GM10248 (cell line): ENCODE measurements at regions of chr10 and their contacts with region 1.

Region 1: DNA sequence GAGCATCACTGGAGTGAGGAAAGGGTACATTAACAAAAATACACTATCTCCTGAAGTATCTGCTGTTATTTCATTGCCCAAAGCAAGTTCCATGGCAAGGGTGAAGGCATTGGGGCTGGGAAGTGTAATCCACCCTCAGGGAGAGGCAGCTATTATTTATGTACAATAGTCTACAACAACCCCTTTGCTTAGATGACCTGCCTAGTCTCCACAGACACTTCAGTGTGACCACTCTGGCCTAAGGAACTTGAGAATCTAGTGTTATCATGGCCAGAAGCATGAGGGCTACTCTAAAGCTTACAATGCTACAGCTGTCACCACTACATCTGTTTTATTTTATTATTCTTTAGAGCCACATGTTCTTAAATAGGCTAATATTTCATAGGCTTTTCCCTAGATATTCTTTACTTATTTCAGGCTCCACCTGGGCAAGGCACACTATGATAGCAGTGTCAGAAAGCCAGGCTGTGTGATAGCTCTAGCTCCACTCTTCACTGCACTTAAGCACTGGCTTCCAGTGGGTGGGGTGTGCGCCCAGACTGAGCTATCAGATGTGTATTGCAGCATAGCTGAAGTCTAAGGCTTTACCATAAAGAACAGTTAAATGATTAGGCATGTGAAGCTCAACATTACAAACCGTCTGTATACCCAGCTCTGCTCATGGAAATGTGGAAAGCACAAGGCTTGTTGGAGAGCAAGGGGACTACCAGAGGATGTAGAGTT is 117.0 kb upstream of the CCDC6 start:
- DNase-seq: no peak
- CTCF ChIP-seq: no peak

Region 2: DNA sequence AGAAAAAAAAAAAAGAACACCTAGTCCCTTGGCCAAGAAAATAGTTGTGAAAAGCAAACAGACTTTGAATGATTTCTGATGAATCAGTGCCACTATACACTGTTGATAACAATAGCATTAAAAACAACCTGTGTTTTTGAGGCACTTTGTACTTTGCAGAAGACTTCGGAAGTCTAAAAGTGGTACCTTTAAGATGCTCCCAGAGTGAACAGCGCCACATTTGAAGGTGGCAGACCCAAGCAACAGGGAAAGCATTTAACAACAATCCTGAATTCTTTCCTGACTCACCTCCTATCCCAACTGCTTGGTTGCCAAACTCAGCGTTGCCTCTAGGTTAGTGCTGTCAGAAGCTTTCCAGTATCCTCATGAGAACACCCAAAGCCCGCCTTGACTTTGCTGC is 14.5 kb before region 1 on chr10:
- CTCF ChIA-PET with region 1: interaction called, 14 read pairs
- POLR2A ChIA-PET with region 1: no interaction called
- DNase-seq: no peak
- CTCF ChIP-seq: no peak

Region 3: DNA sequence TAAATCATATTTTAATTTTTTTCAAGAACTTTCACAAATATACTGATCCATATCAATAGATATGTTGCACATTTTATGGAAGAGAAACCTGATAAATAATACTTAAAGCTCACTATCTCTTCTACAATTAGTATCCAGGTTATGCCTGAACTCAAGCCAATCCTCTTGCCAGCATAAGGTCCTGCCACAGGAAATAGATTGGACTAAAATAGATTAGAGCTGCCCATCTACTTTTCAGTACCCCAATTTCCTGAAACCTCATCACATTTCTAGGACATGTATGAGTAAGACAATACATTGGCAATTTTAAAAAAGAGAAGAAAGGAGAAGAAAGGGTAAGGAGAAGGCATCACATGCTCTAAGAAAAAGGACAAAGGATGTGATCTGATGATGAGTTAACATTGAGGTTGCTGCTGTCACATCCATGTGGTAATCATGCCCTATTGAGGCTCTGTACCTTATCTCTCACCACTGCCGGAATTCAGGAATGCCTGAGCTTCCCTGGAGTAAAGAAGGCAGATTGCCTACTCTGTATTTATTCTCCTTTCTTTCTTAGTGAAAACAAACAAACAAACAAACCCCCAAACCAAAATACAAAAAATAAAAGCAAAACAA is 166.7 kb after region 1 on chr10:
- CTCF ChIA-PET with region 1: no interaction called
- POLR2A ChIA-PET with region 1: no interaction called
- DNase-seq: no peak
- CTCF ChIP-seq: no peak